A549 (cell line): ENCODE measurements at regions of chr1 and their contacts with region 1.

Region 1: DNA sequence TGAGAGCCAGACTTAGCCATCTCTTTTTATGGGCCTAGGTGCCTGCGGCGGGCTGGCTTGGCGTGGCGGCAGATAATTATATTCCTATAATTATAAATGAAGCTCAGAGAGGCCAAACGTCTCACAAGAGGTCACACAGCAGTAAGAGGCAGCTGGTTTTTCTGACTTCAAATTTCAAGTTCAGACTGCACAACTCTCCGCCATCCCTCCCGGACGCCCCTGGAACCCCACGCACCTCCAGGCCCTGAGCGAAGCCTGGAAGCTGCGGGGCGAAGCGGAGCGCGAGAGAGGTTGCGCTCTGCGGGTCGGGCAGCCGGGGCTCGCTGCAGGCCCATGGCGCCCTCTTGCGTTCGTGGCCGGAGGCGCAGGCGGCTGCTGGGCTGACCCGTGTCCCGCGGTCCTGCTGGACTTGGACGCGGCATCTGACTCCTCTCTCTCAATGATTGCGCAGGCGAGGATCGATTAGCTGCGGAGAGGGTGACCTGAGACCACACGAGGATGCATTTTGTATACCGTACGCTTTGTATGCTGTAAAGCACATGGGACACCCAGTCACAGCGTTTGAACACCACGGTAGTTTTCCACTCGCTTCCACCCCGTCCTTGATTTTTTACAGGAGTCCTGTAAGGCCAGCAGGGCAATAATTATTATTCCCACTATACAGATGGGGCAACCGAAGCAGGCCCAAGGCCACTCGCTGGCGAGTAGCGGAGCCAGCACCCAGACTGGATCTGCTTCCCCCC is 272.7 kb downstream of the FOXD2 start:
- DNase-seq: peak; percentile 49 to 84
- ATAC-seq: peak; percentile 81 to 90
- H3K4me3 ChIP-seq: peak overlapping the region; percentile 51
- H3K27ac ChIP-seq: peak overlapping the region; percentile 69 to 87; a peak in 4 of 6 replicates
- H3K4me1 ChIP-seq: peaks cover 12% of the 10 kb centered on the region; the same call in 2 of the 3 replicates
- CTCF ChIP-seq: peak; percentile 86
- EP300 ChIP-seq: no peak
- POLR2A ChIP-seq: no peak
- RAD21 ChIP-seq: peak; percentile 77 to 93

Region 2: DNA sequence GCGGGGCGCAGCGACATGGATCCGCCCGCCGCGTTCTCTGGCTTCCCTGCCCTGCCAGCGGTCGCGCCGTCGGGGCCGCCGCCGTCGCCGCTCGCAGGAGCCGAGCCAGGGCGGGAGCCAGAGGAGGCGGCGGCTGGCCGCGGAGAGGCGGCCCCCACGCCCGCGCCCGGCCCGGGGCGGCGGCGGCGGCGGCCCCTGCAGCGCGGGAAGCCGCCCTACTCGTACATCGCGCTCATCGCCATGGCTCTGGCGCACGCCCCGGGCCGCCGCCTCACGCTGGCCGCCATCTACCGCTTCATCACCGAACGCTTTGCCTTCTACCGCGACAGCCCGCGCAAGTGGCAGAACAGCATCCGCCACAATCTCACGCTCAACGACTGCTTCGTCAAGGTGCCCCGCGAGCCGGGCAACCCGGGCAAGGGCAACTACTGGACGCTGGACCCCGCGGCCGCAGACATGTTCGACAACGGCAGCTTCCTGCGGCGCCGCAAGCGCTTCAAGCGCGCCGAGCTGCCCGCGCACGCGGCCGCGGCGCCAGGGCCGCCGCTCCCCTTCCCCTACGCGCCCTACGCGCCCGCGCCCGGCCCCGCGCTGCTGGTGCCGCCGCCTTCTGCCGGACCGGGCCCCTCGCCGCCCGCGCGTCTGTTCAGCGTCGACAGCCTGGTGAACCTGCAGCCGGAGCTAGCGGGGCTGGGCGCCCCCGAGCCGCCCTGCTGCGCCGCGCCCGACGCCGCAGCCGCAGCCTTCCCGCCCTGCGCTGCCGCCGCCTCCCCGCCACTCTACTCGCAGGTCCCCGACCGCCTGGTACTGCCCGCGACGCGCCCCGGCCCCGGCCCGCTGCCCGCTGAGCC is 294.0 kb before region 1 on chr1:
- CTCF ChIA-PET with region 1: interaction called, 11 read pairs
- POLR2A ChIA-PET with region 1: no interaction called
- DNase-seq: no peak
- ATAC-seq: peak; percentile 30 to 59; a peak in 3 of 6 replicates
- H3K4me3 ChIP-seq: peak overlapping the region; percentile 38
- H3K27ac ChIP-seq: peak overlapping the region in 1 of 2 experiments; percentile 62; a peak in 3 of 6 replicates
- H3K4me1 ChIP-seq: no peaks in the 10 kb centered on the region
- CTCF ChIP-seq: no peak
- EP300 ChIP-seq: no peak
- POLR2A ChIP-seq: no peak
- RAD21 ChIP-seq: no peak

Region 3: GRCh38 chr1:47443530-47444296 is 266.8 kb before region 1 on chr1:
- CTCF ChIA-PET with region 1: interaction called, 313 read pairs
- POLR2A ChIA-PET with region 1: no interaction called
- DNase-seq: no peak
- ATAC-seq: no peak
- H3K4me3 ChIP-seq: no peak overlapping the region
- H3K27ac ChIP-seq: no peak overlapping the region
- H3K4me1 ChIP-seq: no peaks in the 10 kb centered on the region
- CTCF ChIP-seq: no peak
- EP300 ChIP-seq: no peak
- POLR2A ChIP-seq: no peak
- RAD21 ChIP-seq: no peak

Region 4: GRCh38 chr1:47502746-47503370 is 207.6 kb before region 1 on chr1:
- CTCF ChIA-PET with region 1: interaction called, 12 read pairs
- POLR2A ChIA-PET with region 1: no interaction called
- DNase-seq: no peak
- ATAC-seq: no peak
- H3K4me3 ChIP-seq: no peak overlapping the region
- H3K27ac ChIP-seq: no peak overlapping the region
- H3K4me1 ChIP-seq: no peaks in the 10 kb centered on the region
- CTCF ChIP-seq: no peak
- EP300 ChIP-seq: no peak
- POLR2A ChIP-seq: no peak
- RAD21 ChIP-seq: no peak

Region 5: GRCh38 chr1:47696740-47697441 is 13.6 kb before region 1 on chr1:
- CTCF ChIA-PET with region 1: interaction called, 12 read pairs
- POLR2A ChIA-PET with region 1: no interaction called
- DNase-seq: no peak
- ATAC-seq: no peak
- H3K4me3 ChIP-seq: no peak overlapping the region
- H3K27ac ChIP-seq: no peak overlapping the region
- H3K4me1 ChIP-seq: no peaks in the 10 kb centered on the region
- CTCF ChIP-seq: no peak
- EP300 ChIP-seq: no peak
- POLR2A ChIP-seq: no peak
- RAD21 ChIP-seq: no peak